MCF 10A (cell line): ENCODE measurements at regions of chr2 and their contacts with region 1.

Region 1: GRCh38 chr2:217142649-217143266 is 282.9 kb upstream of the TNP1 start:
- DNase-seq: peak; percentile 55
- H3K4me3 Mint-ChIP-seq: no peak overlapping the region
- H3K27ac Mint-ChIP-seq: no peak overlapping the region
- H3K4me1 Mint-ChIP-seq: no peaks in the 10 kb centered on the region
- H3K27me3 Mint-ChIP-seq: peaks cover 8% of the 10 kb centered on the region
- CTCF ChIP-seq: peak; percentile 70

Region 2: GRCh38 chr2:216683846-216684507 is 458.8 kb before region 1 on chr2:
- CTCF ChIA-PET with region 1: interaction called, 12 read pairs
- POLR2A ChIA-PET with region 1: no interaction called
- intact Hi-C with region 1: loop called (anchors 1 kb)
- DNase-seq: peak; percentile 99
- H3K4me3 Mint-ChIP-seq: no peak overlapping the region
- H3K27ac Mint-ChIP-seq: peak overlapping the region; percentile 93
- H3K4me1 Mint-ChIP-seq: peaks cover 32% of the 10 kb centered on the region
- H3K27me3 Mint-ChIP-seq: no peaks in the 10 kb centered on the region
- CTCF ChIP-seq: no peak

Region 3: DNA sequence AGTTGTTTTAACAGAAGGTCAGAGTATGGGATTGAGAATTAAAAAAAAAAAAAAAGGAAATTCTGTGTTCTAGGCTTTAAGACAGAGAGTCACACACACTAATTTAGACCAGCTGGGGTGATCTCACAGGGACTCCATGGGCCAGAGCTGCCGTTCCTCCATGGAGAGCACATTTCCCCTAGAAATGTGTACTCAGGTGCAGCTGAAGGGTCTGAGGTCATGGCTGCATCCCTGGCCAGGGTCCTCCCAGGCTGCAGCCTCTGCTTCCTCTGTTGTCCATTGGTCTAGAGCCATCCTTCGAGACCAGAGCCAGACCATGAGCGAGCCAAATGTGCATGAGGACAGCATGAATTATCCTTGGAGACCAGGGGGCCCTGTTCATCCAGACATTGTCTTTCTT is 92.8 kb before region 1 on chr2:
- CTCF ChIA-PET with region 1: no interaction called
- POLR2A ChIA-PET with region 1: no interaction called
- intact Hi-C with region 1: loop called (anchors 10 kb)
- DNase-seq: no peak
- H3K4me3 Mint-ChIP-seq: no peak overlapping the region
- H3K27ac Mint-ChIP-seq: no peak overlapping the region
- H3K4me1 Mint-ChIP-seq: no peaks in the 10 kb centered on the region
- H3K27me3 Mint-ChIP-seq: peaks cover 17% of the 10 kb centered on the region
- CTCF ChIP-seq: no peak